ENCODE measurements at regions of chr1 and their contacts with region 1.

Region 1: GRCh38 chr1:111720274-111720976 is 18.8 kb downstream of the INKA2 start:
- DNase-seq: no peak
- H3K4me3 Mint-ChIP-seq: no peak overlapping the region
- H3K27ac Mint-ChIP-seq: peak overlapping the region; percentile 38
- H3K4me1 Mint-ChIP-seq: peaks cover 18% of the 10 kb centered on the region
- H3K27me3 Mint-ChIP-seq: no peaks in the 10 kb centered on the region

Region 2: GRCh38 chr1:111704776-111705175 is 15.6 kb before region 1 on chr1:
- CTCF ChIA-PET with region 1: interaction called, 21 read pairs
- POLR2A ChIA-PET with region 1: interaction called, 3 read pairs
- intact Hi-C with region 1: no loop called
- DNase-seq: no peak
- H3K4me3 Mint-ChIP-seq: no peak overlapping the region
- H3K27ac Mint-ChIP-seq: no peak overlapping the region
- H3K4me1 Mint-ChIP-seq: peaks cover 66% of the 10 kb centered on the region
- H3K27me3 Mint-ChIP-seq: no peaks in the 10 kb centered on the region

Region 3: DNA sequence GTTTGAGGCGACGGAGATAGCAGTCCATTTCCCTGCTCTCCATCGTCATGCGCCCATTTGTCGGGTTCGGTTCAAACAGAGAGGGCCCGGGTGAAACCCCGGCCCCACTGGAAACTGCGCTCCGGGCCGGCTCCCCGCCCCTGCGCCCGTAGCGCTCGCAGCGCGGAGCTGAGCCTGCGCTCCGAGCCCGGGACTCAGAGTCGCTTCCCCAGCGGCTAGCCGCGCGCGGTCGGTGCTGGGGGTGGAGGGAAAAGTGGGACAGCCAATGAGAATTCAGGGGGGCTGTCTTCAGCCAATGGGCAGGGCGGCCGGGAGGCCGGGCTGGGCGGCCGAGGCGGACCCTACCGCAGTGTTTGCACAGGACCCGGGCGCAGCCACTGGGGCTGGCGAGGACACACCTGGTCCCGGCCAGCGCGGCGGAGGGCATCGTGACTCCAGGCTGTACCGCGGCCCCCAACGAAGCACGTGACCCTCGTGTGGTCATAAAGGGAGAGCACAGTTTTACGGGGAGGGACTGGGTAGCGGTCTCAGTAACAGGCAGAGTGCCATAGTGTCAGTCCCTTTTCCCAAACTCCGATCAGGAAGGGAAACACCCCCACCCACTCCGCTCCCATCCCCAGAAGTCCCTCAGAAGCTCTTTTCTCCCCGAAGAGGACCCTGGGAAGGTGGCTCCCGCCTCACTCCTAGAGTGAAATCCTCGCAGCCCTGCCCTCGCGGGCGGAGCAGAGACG is 18.9 kb after region 1 on chr1 and contains the start of gene INKA2:
- CTCF ChIA-PET with region 1: interaction called, 28 read pairs
- POLR2A ChIA-PET with region 1: interaction called, 3 read pairs
- intact Hi-C with region 1: loop called (anchors 2 kb)
- DNase-seq: peak; percentile 88
- H3K4me3 Mint-ChIP-seq: peak within 1 kb of the TSS; percentile 84
- H3K27ac Mint-ChIP-seq: no peak within 1 kb of the TSS
- H3K4me1 Mint-ChIP-seq: peaks cover 11% of the 10 kb centered on the region
- H3K27me3 Mint-ChIP-seq: peaks cover 28% of the 10 kb centered on the region
- total RNA-seq, gene INKA2: 1.4 to 2.3 TPM

Region 4: GRCh38 chr1:111747282-111747734 is 26.9 kb after region 1 on chr1:
- CTCF ChIA-PET with region 1: interaction called, 84 read pairs
- POLR2A ChIA-PET with region 1: interaction called, 4 read pairs
- intact Hi-C with region 1: loop called (anchors 2 kb)
- DNase-seq: peak; percentile 80
- H3K4me3 Mint-ChIP-seq: no peak overlapping the region
- H3K27ac Mint-ChIP-seq: no peak overlapping the region
- H3K4me1 Mint-ChIP-seq: peaks cover 3% of the 10 kb centered on the region
- H3K27me3 Mint-ChIP-seq: no peaks in the 10 kb centered on the region

Region 5: DNA sequence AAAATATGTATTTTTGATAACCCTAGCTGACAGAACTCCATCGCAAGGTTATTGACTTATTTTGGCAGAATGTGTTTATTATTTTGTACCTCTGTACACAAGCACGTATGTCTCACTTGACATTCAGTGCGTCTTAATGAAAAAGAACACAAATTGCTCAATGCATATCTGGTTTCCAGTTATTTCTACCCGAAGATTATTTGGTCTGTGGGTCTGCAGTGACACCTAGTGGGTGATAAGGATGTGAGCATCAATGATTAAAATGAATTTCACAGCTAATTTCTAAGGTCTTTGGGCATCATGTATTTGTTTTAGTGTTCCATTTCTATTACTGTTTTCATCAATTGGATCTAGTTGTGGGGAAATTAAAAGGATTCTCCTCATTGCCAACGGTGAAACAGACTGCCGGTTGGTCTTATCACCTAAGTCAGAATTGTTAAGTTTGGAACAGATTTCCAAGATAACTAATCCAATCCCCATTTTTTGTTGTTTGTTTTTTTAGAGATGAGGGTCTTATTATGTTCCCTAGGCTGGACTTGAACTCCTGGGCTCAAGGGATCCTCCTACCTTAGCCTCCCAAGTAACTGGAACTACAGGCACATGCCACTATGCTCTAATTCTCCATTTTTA is 49.2 kb after region 1 on chr1:
- CTCF ChIA-PET with region 1: interaction called, 46 read pairs
- POLR2A ChIA-PET with region 1: no interaction called
- intact Hi-C with region 1: no loop called
- DNase-seq: peak; percentile 44
- H3K4me3 Mint-ChIP-seq: no peak overlapping the region
- H3K27ac Mint-ChIP-seq: no peak overlapping the region
- H3K4me1 Mint-ChIP-seq: peaks cover 3% of the 10 kb centered on the region
- H3K27me3 Mint-ChIP-seq: no peaks in the 10 kb centered on the region

Region 6: DNA sequence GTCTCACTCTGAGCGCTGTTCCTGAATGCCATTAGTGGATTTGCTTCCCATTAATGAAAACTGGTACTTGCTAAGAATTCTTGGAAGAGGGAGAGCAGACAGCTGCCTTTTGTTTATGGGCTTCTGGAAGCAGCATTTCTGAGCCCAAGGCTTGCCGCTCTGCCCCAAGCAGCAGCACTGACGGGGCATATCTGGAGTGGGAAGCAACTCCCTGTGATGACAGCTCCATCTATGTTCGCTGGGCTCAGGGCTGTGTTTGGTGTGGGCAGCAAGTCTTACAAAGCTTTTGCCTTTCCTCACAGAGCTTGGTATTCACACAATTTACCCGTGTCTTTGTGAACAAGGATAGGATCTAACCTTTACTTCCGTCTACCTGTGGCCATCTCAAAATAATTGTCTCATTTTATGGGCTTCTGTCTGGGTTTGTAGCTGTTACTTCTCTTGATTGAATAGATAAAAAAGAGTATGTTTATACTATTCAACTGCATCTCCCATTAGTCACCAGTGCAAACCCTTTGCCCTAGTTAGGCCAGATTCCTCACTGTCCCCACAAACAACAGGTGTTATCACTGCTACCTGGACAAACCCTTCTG is 107.6 kb after region 1 on chr1:
- CTCF ChIA-PET with region 1: no interaction called
- POLR2A ChIA-PET with region 1: no interaction called
- intact Hi-C with region 1: no loop called
- DNase-seq: no peak
- H3K4me3 Mint-ChIP-seq: no peak overlapping the region
- H3K27ac Mint-ChIP-seq: no peak overlapping the region
- H3K4me1 Mint-ChIP-seq: no peaks in the 10 kb centered on the region
- H3K27me3 Mint-ChIP-seq: peaks cover 29% of the 10 kb centered on the region

Region 7: GRCh38 chr1:111924786-111925185 is 204.4 kb after region 1 on chr1:
- CTCF ChIA-PET with region 1: no interaction called
- POLR2A ChIA-PET with region 1: no interaction called
- intact Hi-C with region 1: no loop called
- DNase-seq: no peak
- H3K4me3 Mint-ChIP-seq: no peak overlapping the region
- H3K27ac Mint-ChIP-seq: no peak overlapping the region
- H3K4me1 Mint-ChIP-seq: no peaks in the 10 kb centered on the region
- H3K27me3 Mint-ChIP-seq: peaks cover 12% of the 10 kb centered on the region